ENCODE measurements at regions of chr1 and their contacts with region 1.

Region 1: GRCh38 chr1:40531381-40532061 is at the start of gene ZNF684:
- DNase-seq: peak; percentile 73 to 82
- H3K4me3 ChIP-seq: peak within 1 kb of the TSS; percentile 83 to 92 (median 88)
- H3K27ac ChIP-seq: peak within 1 kb of the TSS; percentile 78
- H3K4me1 ChIP-seq: no peaks in the 10 kb centered on the region
- H3K27me3 ChIP-seq: no peaks in the 10 kb centered on the region
- CTCF ChIP-seq: no peak
- EP300 ChIP-seq: no peak
- POLR2A ChIP-seq: peak in 1 of 2 experiments; percentile 70; a peak in 2 of 3 replicates
- RAD21 ChIP-seq: no peak
- total RNA-seq, gene ZNF684: 7.3 and 9.3 TPM in 2 replicates

Region 2: DNA sequence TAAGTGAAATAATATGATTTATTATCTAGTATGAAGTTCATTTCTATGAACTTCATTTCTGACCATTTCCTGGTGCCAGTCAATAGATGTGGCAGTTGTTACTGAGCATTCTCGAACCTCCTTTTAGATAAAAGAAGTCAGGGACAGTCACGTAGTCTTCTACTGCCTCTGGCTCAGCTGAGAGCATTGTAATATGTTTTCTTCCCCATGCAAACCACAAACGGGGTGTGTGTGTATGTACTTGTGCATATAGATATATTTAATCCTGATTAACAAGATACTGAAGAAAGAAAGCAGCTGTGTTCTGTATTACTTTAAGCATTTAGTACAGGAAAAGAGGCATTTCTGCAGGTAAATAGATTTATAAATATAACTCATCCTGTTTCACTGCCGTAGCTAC is 21.5 kb after region 1 on chr1:
- CTCF ChIA-PET with region 1: interaction called, 13 read pairs
- POLR2A ChIA-PET with region 1: interaction called, 3 read pairs
- DNase-seq: no peak
- H3K4me3 ChIP-seq: no peak overlapping the region
- H3K27ac ChIP-seq: no peak overlapping the region
- H3K4me1 ChIP-seq: no peaks in the 10 kb centered on the region
- H3K27me3 ChIP-seq: no peaks in the 10 kb centered on the region
- CTCF ChIP-seq: no peak
- EP300 ChIP-seq: no peak
- POLR2A ChIP-seq: no peak
- RAD21 ChIP-seq: no peak

Region 3: DNA sequence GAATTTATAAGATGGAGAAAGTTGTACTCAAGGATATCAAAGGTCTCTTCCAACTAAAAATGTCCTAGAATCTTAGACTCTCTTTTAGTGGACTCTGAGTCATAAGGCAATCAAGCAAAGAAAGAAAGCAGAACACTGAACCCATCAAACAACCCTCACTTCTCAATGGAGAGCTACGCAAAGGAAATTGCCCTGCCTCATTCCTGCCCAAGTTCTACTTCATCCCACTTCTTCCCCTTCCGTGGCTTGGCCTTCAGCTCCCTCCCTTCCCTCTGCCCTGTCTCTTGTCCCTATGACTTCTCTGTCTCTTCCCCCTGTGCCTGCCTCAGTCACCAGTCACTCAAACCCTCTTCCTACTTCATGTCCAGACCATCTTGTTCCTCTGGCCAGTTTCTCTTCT is 75.5 kb after region 1 on chr1:
- CTCF ChIA-PET with region 1: no interaction called
- POLR2A ChIA-PET with region 1: no interaction called
- DNase-seq: no peak
- H3K4me3 ChIP-seq: no peak overlapping the region
- H3K27ac ChIP-seq: no peak overlapping the region
- H3K4me1 ChIP-seq: no peaks in the 10 kb centered on the region
- H3K27me3 ChIP-seq: no peaks in the 10 kb centered on the region
- CTCF ChIP-seq: no peak
- EP300 ChIP-seq: no peak
- POLR2A ChIP-seq: no peak
- RAD21 ChIP-seq: no peak

Region 4: DNA sequence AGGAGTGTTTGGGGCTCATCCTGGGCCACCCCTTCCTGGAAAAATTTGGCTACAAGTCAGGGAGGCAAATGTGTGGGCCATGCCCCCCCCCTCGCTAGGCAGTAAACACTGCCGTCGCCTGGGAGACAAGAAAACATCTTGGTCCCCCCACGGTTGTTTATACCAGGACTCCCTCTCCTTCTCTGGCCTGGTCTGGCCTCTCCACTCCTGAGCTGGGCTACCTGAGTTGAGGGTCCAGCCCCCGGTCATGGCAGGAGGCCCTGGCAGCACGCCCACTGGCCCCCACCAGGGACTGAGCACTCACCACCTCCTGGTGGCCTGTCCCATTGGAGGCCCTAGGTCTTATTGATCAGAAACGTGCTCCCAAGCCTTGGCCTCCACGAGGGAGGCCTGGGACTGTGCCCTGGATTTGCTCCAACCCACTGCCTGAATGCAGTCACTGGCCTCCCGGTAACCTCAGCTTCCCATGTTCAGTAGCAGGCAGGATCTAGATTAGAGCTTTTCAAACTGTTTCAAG is 267.9 kb after region 1 on chr1:
- CTCF ChIA-PET with region 1: no interaction called
- POLR2A ChIA-PET with region 1: no interaction called
- DNase-seq: no peak
- H3K4me3 ChIP-seq: no peak overlapping the region
- H3K27ac ChIP-seq: no peak overlapping the region
- H3K4me1 ChIP-seq: peaks cover 9 to 32% (median 24%) of the 10 kb centered on the region in 4 experiments
- H3K27me3 ChIP-seq: peaks cover 0 to 6% (median 4%) of the 10 kb centered on the region in 4 experiments; a peak in 3 of 7 replicates
- CTCF ChIP-seq: no peak
- EP300 ChIP-seq: no peak
- POLR2A ChIP-seq: no peak
- RAD21 ChIP-seq: no peak

Measured in H1 (cell line).